ENCODE measurements at regions of chr10 and their contacts with region 1.

Region 1: DNA sequence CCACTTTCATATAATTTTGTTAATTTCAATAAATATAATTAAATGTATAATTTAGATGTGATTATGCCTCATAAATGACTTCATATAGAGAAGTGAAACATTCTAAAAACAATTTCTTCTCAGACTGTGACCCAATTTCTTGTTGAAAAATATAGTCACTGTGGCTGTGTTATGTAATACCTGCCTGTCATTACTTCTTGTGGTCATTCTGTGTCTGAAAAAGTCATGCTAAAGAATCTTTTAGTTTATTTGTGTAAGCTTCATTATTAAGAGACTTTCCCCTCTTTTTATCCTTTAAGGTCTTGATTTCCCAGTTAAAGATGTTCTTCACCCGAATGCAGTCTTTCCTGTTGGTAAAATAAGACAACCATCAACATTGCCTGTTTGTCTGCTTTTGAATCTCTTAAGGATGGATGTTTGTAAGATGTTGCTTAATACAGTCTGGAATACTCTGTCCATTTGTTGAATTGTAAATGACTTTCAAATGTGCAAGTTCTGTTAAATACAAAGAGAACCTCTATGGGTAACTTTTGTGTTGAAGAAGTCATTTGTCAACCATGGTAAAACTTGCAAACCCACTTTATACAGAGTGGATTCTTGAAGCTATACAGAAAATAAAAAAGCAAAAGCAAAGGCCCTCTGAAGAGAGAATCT is 16.0 kb downstream of the KAT6B start:
- DNase-seq: no peak
- H3K4me3 ChIP-seq: no peak overlapping the region
- H3K27ac ChIP-seq: no peak overlapping the region
- H3K27me3 ChIP-seq: no peaks in the 10 kb centered on the region
- CTCF ChIP-seq: no peak

Region 2: GRCh38 chr10:74593470-74593869 is 249.0 kb before region 1 on chr10:
- CTCF ChIA-PET with region 1: no interaction called
- POLR2A ChIA-PET with region 1: interaction called, 11 read pairs
- DNase-seq: peak; percentile 60
- H3K4me3 ChIP-seq: no peak overlapping the region
- H3K27ac ChIP-seq: no peak overlapping the region
- H3K27me3 ChIP-seq: no peaks in the 10 kb centered on the region
- CTCF ChIP-seq: no peak

Region 3: DNA sequence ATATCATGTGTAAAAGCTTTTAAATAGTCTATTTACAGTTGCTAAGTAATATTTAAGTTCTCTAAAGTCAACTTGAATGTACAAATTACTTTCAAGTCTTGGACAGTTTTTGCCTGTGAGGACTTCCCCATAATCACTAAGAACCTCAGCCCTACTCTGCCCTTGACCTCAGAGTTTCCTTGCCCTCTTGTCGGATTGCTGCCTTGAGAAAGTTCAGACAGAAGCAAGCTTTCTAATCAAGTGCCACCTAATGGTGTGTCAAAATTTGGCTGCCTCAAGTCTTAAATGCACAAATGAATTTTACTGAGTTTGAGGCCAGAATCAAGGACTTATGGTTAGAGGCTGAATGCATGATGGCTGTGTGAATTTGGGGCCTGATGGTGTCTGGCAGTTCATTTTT is 104.4 kb before region 1 on chr10:
- CTCF ChIA-PET with region 1: no interaction called
- POLR2A ChIA-PET with region 1: no interaction called
- DNase-seq: no peak
- H3K4me3 ChIP-seq: no peak overlapping the region
- H3K27ac ChIP-seq: no peak overlapping the region
- H3K27me3 ChIP-seq: no peaks in the 10 kb centered on the region
- CTCF ChIP-seq: no peak

Region 4: GRCh38 chr10:74859546-74859945 is 17.1 kb after region 1 on chr10:
- CTCF ChIA-PET with region 1: no interaction called
- POLR2A ChIA-PET with region 1: no interaction called
- DNase-seq: no peak
- H3K4me3 ChIP-seq: no peak overlapping the region
- H3K27ac ChIP-seq: no peak overlapping the region
- H3K27me3 ChIP-seq: no peaks in the 10 kb centered on the region
- CTCF ChIP-seq: no peak

Region 5: DNA sequence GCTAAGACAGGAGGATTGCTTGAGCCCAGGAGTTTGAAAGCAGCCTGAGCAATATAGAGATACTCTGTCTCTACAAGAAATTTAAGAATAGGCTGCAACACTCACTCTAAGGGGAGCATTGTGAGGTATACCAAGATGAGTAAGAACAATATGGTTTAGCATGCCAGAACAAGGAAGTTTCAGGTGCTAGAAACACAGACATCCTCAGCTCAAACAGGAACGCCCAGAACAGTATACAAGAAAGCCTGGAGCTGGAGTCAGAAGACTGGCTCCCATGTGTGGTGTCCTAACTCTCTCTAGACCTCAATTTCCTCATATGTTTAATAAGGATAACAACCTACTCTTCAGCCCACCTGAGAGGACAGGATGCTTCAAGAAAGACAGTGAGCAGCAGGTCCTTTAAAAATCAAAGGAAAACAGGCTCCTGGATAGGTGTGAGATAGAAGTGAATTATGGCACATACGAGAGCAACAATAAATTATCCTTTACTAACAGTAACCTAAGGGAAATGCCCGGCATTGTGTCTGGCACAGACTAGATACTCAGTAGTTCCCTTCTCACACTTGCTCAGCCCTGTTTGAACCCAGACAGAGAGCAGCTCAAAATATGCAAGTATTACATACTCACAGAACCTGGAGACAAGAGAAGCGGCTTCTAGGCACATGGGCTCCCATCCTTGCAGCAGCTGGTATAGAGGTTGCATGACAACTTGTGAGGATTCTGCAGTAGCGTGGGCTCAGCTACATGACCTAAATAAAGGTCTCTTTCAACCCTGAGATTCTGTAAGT is 29.4 kb after region 1 on chr10:
- CTCF ChIA-PET with region 1: no interaction called
- POLR2A ChIA-PET with region 1: no interaction called
- DNase-seq: no peak
- H3K4me3 ChIP-seq: no peak overlapping the region
- H3K27ac ChIP-seq: no peak overlapping the region
- H3K27me3 ChIP-seq: no peaks in the 10 kb centered on the region
- CTCF ChIP-seq: no peak